Left cardiac atrium (tissue), 4 donors: ENCODE measurements at regions of chr6 and their contacts with region 1.

Region 1: DNA sequence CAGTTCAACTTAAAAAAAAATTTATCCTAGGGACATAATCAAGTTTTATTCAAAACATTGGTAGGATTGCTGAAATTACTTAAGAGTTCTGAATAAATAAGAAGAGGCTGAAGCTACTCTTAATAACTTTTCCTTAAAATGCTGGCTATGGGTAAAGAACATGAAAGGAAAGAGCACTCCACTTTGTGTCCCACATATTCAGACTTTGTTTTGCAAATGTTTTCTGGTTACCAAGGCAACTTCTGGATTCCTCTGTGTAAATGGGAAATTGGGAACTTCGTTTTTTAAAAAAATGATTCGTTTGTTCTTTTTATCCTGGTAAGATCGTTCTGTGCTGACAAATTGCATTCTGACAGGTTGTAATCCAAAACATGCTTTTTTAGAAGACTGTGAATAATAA is 115.0 kb downstream of the KIF6 start:
- DNase-seq: no peak
- ATAC-seq: peak; percentile 27 to 70

Region 2: GRCh38 chr6:39561536-39562266 is 48.5 kb before region 1 on chr6:
- intact Hi-C with region 1: no loop called
- DNase-seq: no peak
- ATAC-seq: peak; percentile 50 to 72

Region 3: DNA sequence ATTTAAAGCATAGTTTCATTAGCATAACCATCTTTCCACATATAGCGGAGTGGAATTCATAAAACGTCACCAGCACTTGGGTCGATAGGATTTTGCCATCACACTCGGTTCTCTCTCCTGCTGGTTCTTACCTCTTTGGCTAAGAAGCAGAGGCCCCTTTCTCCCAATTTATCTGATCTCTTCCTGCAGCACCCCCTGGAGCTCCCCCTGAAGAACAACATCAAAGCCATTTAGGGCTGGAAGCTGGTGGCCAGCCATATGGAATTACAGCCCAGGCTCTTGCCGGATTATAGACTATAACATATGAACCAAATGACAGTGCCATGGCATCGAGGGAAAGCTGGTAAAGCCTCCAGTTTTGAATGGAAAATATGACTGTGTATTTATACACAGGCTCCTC is 121.3 kb after region 1 on chr6:
- intact Hi-C with region 1: loop called in 1 of 2 experiments (anchors 10 kb)
- DNase-seq: no peak
- ATAC-seq: no peak